ENCODE measurements at regions of chr9 and their contacts with region 1.

Region 1: DNA sequence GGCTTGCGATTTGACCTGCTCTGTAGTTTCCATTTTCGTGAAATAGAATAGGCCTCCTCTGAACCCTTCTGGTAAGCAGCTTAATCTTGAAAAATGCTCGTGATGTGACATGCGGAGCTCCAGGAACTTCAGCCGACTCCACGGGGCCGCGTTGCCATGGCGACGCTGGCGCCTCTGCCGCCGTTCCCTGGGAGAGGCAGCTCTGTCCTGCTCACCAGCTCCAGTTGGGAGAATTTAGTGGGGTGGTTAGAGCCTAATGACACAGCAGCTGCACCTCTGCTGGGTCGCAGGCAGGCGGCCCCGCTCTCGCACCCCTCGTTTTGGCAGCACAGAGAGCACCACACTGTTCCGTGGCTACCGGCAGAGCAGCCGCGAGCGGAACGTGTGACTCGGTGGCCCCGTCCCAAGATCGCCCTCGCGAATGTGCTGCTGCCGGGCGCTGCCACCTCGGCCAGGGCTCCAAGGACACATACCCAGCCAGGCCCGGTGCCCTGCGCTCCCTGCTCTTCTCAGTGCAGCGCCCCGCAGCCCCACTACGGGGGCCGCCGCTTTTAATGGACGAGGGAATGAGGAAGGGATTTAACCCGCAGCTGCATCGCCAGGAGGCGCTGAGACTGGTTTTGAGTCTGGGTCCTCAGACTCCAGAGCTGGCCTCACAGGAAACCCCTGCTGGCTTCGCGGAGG is 131.2 kb upstream of the LMX1B start:
- DNase-seq: peak; percentile 75 to 85 (median 83)
- H3K4me3 ChIP-seq: no peak overlapping the region
- H3K27ac ChIP-seq: peak overlapping the region in 1 of 2 donors; percentile 74
- H3K4me1 ChIP-seq: peaks cover 7% of the 10 kb centered on the region
- H3K27me3 ChIP-seq: no peaks in the 10 kb centered on the region
- CTCF ChIP-seq: no peak
- EP300 ChIP-seq: no peak
- POLR2A ChIP-seq: no peak

Region 2: DNA sequence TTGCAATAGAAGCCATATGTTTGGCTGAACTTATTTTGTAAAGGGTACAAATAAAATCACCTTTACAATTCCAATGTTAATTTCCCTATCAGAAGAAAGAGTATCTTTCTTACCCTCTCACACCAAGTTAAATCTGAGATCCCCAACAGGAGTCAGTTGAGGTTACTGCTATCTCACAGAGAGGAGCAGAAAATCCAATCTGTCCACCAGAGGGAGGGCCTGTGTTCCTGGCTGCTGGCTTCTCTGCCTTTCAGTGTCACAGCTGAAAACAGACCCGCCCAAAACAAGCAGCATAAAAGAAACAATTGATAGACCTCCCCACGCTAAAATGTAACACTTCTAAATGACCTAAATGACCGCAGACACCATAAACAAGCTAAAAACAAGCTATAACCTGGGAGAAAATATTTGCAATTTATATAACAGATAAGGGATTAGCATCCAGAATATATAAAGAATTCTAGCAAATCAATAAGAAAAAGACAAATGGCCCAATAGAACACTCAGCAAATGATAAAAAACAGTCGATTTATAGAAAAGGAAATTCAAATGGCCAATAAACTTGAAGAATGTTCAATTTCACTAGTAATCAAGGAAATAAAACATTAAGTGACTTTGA is 180.4 kb before region 1 on chr9:
- intact Hi-C with region 1: loop called in 1 of 4 experiments (anchors 10 kb)
- DNase-seq: peak in 1 of 5 donors; percentile 54
- H3K4me3 ChIP-seq: no peak overlapping the region
- H3K27ac ChIP-seq: no peak overlapping the region
- H3K4me1 ChIP-seq: no peaks in the 10 kb centered on the region
- H3K27me3 ChIP-seq: no peaks in the 10 kb centered on the region
- CTCF ChIP-seq: peak in 2 of 3 donors; percentile 14 to 38
- EP300 ChIP-seq: no peak
- POLR2A ChIP-seq: no peak

Region 3: DNA sequence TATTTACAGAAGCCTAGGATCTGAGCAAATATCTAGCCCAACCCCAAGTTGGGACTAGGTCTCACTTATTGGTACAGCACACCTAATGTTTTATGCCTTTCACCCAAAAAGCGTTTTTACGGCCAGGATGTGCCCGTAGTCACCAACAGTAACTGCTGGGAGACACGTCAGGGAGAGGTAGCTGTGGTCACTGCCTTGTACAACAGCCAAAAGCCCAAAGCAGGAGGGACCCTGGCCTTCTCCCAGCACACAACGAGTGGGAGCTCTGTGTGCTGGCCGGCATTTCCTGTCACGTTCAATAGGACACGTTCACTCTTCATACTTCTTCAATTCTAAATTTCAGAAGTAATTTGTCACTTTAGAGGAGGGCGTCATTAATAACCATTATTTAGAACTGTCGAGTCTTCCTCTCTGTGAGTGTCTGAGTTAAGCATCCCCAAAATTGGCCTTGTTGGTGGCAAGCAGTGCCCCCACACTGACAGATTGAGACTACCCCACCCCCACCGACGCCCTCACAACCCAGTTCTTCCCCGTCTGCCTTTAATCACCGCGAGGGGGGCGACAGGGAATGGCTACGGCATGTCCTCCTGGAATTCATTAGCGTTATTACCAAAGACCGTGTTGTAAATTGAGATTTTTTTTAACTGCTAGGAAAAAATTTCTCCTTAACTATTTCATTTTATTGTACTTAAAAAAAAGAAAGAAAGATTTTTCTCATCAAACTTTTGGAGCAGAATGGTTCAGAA is 75.2 kb before region 1 on chr9:
- intact Hi-C with region 1: loop called in 1 of 4 experiments (anchors 10 kb)
- DNase-seq: no peak
- H3K4me3 ChIP-seq: no peak overlapping the region
- H3K27ac ChIP-seq: no peak overlapping the region
- H3K4me1 ChIP-seq: peaks cover 3% of the 10 kb centered on the region
- H3K27me3 ChIP-seq: no peaks in the 10 kb centered on the region
- CTCF ChIP-seq: no peak
- EP300 ChIP-seq: no peak
- POLR2A ChIP-seq: no peak

Region 4: GRCh38 chr9:126564711-126565110 is 82.2 kb after region 1 on chr9:
- intact Hi-C with region 1: no loop called
- DNase-seq: no peak
- H3K4me3 ChIP-seq: no peak overlapping the region
- H3K27ac ChIP-seq: no peak overlapping the region
- H3K4me1 ChIP-seq: no peaks in the 10 kb centered on the region
- H3K27me3 ChIP-seq: no peaks in the 10 kb centered on the region
- CTCF ChIP-seq: no peak
- EP300 ChIP-seq: no peak
- POLR2A ChIP-seq: no peak

Measured in ovary (tissue), 10 donors.